ENCODE measurements at regions of chr9 and their contacts with region 1.

Region 1: GRCh38 chr9:136143216-136144001 is 24.7 kb upstream of the TMEM250 start:
- ATAC-seq: peak; percentile 62 to 82 (median 71)
- H3K4me3 ChIP-seq: no peak overlapping the region
- H3K27ac ChIP-seq: no peak overlapping the region
- H3K4me1 ChIP-seq: peaks cover 38 to 39% of the 10 kb centered on the region in 2 donors

Region 2: DNA sequence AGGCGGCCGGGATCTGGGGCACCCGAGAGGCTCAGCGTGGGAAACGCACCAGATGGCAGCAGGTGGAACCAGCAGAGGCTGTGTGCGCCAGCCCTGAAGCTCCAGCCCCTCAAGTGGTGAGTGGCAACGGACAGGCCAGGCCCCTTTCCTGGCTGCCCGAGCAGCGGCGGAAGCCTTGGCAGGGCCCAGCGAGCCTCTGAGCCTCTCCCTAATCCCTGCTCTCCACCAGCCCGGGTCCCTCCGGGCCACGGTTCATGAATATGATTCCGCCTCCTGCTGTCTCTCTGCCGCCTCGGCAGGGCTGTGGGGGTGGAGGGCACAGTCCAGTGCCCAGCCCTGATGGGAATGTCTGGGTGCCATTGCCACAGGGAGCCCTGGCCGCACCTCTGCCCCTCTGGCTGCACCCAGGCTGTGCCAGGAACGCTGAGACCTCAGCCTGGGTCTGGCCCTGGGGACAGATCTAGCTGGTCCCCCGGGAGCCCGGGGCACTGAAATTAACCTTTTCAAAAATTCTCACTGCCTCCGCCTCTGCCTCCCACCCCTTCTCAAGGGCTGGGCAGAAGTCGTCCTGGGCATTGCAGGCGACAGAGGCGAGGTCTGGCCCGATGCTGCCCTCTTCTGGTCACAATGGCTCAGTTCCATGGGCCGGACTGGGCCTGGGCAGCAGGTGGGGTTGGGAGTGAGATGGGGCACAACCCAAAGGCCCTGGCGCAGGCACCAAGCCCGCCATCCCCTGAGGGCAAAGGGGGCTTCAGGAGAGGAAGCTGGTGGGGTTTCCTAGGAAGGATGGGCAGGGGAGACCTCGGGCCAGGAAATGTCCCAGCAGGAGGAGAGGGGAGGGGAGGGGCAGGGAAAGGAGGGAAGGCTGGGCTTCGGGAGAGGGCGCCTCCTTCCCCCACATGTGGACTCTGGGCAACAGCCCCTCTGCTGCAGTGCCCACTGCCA is 140.2 kb after region 1 on chr9:
- in situ Hi-C with region 1: loop called in 1 of 9 experiments (anchors 10 kb)
- ATAC-seq: peak; percentile 92 to 100 (median 98)
- H3K4me3 ChIP-seq: no peak overlapping the region
- H3K27ac ChIP-seq: no peak overlapping the region
- H3K4me1 ChIP-seq: peaks cover 7 to 18% of the 10 kb centered on the region in 2 donors